ENCODE measurements at regions of chr20 and their contacts with region 1.

Region 1: GRCh38 chr20:15654208-15654645 is 919.0 kb downstream of the KIF16B start:
- DNase-seq: peak; percentile 47
- CTCF ChIP-seq: peak; percentile 53

Region 2: DNA sequence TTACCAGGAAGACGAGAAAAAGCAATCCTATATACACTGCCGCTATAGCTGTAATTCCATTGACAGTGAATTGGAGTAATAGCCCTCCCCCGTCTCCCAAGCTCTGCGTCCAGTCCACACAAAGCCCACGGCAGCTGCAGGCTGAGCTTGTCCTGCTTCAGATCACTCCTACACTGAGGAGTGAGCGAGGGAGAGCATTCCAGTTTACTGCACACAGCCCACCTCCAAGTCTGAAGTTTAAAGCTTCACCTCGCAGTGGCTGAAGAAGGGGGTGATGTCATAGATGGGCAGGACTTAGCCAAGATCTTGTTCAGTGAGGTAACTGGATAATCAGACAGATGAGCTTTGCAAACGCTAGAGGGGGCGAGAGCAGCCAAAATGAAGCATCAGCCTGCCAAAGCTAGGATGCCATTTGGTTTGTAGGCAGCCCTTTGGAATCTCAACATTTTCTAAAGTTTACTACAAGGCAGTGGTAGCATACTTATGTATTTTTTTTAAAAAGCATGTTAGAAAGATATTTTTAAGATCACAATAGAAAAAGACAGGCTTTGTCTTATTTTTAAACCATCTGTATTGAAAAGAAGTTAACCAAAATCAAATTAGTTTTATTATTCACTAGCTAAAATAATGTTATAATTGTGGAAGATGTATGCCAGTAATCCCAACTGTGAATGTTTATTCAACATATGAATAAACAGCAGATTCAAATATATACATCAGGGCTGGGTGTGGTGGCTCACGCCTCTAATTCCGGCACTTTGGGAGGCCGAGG is 1316.6 kb before region 1 on chr20 and contains the start of gene FLRT3:
- CTCF ChIA-PET with region 1: interaction called, 16 read pairs
- POLR2A ChIA-PET with region 1: no interaction called
- DNase-seq: peak; percentile 46
- CTCF ChIP-seq: peak; percentile 69

Region 3: GRCh38 chr20:15674253-15675060 is 20.2 kb after region 1 on chr20:
- CTCF ChIA-PET with region 1: interaction called, 12 read pairs
- POLR2A ChIA-PET with region 1: no interaction called
- DNase-seq: no peak
- CTCF ChIP-seq: no peak